IMR-90 (cell line): ENCODE measurements at regions of chr5 and their contacts with region 1.

Region 1: GRCh38 chr5:171494452-171495121 is 75.1 kb downstream of the FGF18 start:
- DNase-seq: peak; percentile 59
- ATAC-seq: peak; percentile 89
- H3K4me3 ChIP-seq: no peak overlapping the region
- H3K27ac ChIP-seq: peak overlapping the region; percentile 80; the same call in 1 of the 2 replicates
- H3K4me1 ChIP-seq: peaks cover 14% of the 10 kb centered on the region
- H3K27me3 ChIP-seq: peaks cover 4% of the 10 kb centered on the region
- CTCF ChIP-seq: no peak
- POLR2A ChIP-seq: no peak
- RAD21 ChIP-seq: no peak

Region 2: GRCh38 chr5:171595801-171596231 is 101.2 kb after region 1 on chr5:
- CTCF ChIA-PET with region 1: no interaction called
- POLR2A ChIA-PET with region 1: no interaction called
- dilution Hi-C with region 1: no loop called
- in situ Hi-C with region 1: no loop called
- intact Hi-C with region 1: loop called (anchors 5 kb)
- DNase-seq: peak; percentile 92
- ATAC-seq: peak; percentile 41
- H3K4me3 ChIP-seq: no peak overlapping the region
- H3K27ac ChIP-seq: peak overlapping the region; percentile 87
- H3K4me1 ChIP-seq: peaks cover 8% of the 10 kb centered on the region
- H3K27me3 ChIP-seq: peaks cover 2% of the 10 kb centered on the region; the same call in 1 of the 2 replicates
- CTCF ChIP-seq: no peak
- POLR2A ChIP-seq: no peak
- RAD21 ChIP-seq: no peak

Region 3: DNA sequence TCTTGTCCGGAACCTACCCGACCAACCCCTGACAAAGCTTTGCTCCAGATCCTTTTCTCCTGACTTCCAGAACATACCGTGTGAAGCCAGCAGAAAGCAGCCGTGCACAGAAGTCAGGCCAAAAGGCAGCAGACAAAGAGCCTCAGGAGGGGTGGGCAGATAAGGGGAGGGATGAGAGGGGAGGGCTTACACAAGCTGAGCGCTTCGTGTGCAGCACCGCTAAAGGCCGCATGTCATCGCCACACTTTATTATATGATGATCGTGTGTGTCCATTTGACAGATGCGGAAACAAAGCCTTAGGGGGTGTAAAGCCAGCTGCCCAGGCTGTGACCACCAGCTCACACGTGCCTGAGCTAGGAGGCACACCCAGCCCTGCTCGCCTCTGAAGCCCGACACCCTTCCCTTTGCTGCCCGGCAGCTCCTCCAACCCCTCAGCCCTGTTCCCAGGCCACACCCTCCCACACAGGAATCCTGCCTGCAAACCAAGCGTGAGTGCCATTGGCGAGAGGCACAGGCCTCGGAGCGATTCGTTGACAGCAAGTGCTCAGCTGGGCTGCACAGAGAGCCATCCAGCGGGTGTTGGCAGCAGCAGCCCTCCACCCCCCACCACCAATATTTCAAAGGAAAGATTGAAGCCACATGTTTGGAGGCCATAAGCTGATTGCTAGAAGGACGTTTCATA is 120.5 kb after region 1 on chr5:
- CTCF ChIA-PET with region 1: no interaction called
- POLR2A ChIA-PET with region 1: no interaction called
- dilution Hi-C with region 1: no loop called
- in situ Hi-C with region 1: no loop called
- intact Hi-C with region 1: no loop called
- DNase-seq: no peak
- ATAC-seq: no peak; the same call in 1 of the 2 replicates
- H3K4me3 ChIP-seq: no peak overlapping the region
- H3K27ac ChIP-seq: no peak overlapping the region
- H3K4me1 ChIP-seq: no peaks in the 10 kb centered on the region
- H3K27me3 ChIP-seq: peaks cover 58% of the 10 kb centered on the region
- CTCF ChIP-seq: no peak
- POLR2A ChIP-seq: no peak
- RAD21 ChIP-seq: no peak